ENCODE measurements at regions of chr1 and their contacts with region 1.

Region 1: GRCh38 chr1:233240829-233241682 is 54.5 kb downstream of the PCNX2 start:
- DNase-seq: peak; percentile 48 to 69 (median 53)
- H3K4me3 ChIP-seq: peak overlapping the region in 2 of 3 experiments; percentile 16 to 36
- H3K4me3 Mint-ChIP-seq: peak overlapping the region; percentile 37 to 75
- H3K27ac ChIP-seq: no peak overlapping the region
- H3K27ac Mint-ChIP-seq: peak overlapping the region in 1 of 7 donors; percentile 13
- H3K4me1 ChIP-seq: peaks cover 23 to 26% of the 10 kb centered on the region in 2 donors
- H3K4me1 Mint-ChIP-seq: peaks cover 28% of the 10 kb centered on the region
- H3K27me3 ChIP-seq: no peaks in the 10 kb centered on the region
- H3K27me3 Mint-ChIP-seq: peaks cover 0 to 2% (median 0%) of the 10 kb centered on the region in 3 donors
- CTCF ChIP-seq: peak; percentile 87

Region 2: DNA sequence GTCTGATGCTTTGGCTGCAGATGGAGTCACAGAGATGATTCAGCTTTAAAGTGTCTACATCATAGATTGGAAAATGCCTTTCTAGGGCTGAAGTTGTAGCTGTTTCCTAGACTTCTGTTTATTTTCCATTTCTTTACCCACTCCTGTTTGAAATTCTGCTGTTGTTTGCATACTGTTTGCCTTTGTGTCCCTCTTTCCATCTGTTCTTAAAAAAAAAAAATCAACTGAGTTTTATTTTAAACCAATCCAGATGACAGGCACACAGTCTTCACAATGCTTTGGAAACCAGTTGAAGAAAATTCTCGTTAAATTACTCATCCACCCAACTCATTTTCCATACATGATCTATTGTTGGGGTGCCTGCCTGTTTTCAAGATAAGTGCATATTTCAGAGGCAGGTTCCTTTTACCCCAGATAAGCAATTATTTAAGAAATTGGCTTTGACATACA is 1368.6 kb before region 1 on chr1:
- intact Hi-C with region 1: loop called in 1 of 2 experiments (anchors 5 kb)
- DNase-seq: no peak
- H3K4me3 ChIP-seq: no peak overlapping the region
- H3K4me3 Mint-ChIP-seq: no peak overlapping the region
- H3K27ac ChIP-seq: no peak overlapping the region
- H3K27ac Mint-ChIP-seq: no peak overlapping the region
- H3K4me1 ChIP-seq: peaks cover 11 to 14% of the 10 kb centered on the region in 2 donors
- H3K4me1 Mint-ChIP-seq: peaks cover 22% of the 10 kb centered on the region
- H3K27me3 ChIP-seq: no peaks in the 10 kb centered on the region
- H3K27me3 Mint-ChIP-seq: no peaks in the 10 kb centered on the region
- CTCF ChIP-seq: no peak

Region 3: GRCh38 chr1:232937741-232938375 is 303.2 kb before region 1 on chr1:
- intact Hi-C with region 1: loop called in 1 of 2 experiments (anchors 10 kb)
- DNase-seq: peak; percentile 17 to 29 (median 19)
- H3K4me3 ChIP-seq: no peak overlapping the region
- H3K4me3 Mint-ChIP-seq: peak overlapping the region in 1 of 2 donors; percentile 72
- H3K27ac ChIP-seq: peak overlapping the region in 1 of 2 donors; percentile 1
- H3K27ac Mint-ChIP-seq: peak overlapping the region in 5 of 7 donors; percentile 6 to 86 (median 42)
- H3K4me1 ChIP-seq: peaks cover 23 to 32% of the 10 kb centered on the region in 2 donors
- H3K4me1 Mint-ChIP-seq: peaks cover 32% of the 10 kb centered on the region
- H3K27me3 ChIP-seq: no peaks in the 10 kb centered on the region
- H3K27me3 Mint-ChIP-seq: no peaks in the 10 kb centered on the region
- CTCF ChIP-seq: no peak

Region 4: DNA sequence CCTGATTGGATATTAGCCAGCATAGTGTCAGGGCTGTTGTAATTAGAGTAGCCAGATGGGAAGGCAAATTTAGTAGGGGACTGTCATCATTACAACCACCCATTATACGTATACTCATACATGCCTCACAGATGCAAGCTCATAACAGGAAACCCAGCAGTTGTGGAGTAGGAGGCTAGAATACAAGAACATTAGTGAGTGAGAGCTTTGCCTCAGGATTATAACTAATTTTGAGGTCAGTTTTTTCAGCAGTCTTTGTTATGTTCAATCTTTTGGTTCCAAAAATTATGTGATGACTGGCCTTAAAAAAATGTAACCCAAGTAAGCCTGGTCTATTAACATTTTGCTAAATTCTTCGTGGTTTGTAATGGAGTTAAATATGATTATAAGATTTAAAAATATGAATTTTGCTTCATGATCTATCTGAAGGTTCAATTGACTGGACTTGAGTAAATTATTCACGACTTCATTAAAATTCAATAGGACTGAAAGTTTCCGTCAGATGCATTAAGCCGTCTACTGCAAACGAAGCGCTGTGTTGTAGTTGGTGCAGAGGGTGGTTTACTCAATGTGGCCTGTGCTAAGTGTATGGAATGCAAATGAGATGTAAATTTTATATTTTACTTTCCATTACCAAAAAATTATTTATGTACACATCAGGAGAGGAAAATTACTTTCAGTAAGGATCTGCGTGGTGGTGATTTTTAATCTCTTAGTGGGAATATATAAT is 421.7 kb after region 1 on chr1:
- intact Hi-C with region 1: no loop called
- DNase-seq: no peak
- H3K4me3 ChIP-seq: no peak overlapping the region
- H3K4me3 Mint-ChIP-seq: no peak overlapping the region
- H3K27ac ChIP-seq: no peak overlapping the region
- H3K27ac Mint-ChIP-seq: no peak overlapping the region
- H3K4me1 ChIP-seq: no peaks in the 10 kb centered on the region
- H3K4me1 Mint-ChIP-seq: no peaks in the 10 kb centered on the region
- H3K27me3 ChIP-seq: no peaks in the 10 kb centered on the region
- H3K27me3 Mint-ChIP-seq: peaks cover 0 to 2% (median 0%) of the 10 kb centered on the region in 3 donors
- CTCF ChIP-seq: no peak

Measured in CD14-positive monocyte (primary cell).